ENCODE measurements at regions of chr1 and their contacts with region 1.

Region 1: GRCh38 chr1:109041621-109042468 is at the start of gene WDR47:
- DNase-seq: peak; percentile 94 to 95 (median 95)
- H3K4me3 ChIP-seq: peak within 1 kb of the TSS; percentile 74 to 97 (median 88)
- H3K4me3 Mint-ChIP-seq: peak within 1 kb of the TSS; percentile 86 to 93
- H3K27ac ChIP-seq: peak within 1 kb of the TSS; percentile 60 to 88
- H3K27ac Mint-ChIP-seq: peak within 1 kb of the TSS; percentile 77 to 92 (median 85)
- H3K4me1 ChIP-seq: peaks cover 13 to 17% of the 10 kb centered on the region in 2 donors
- H3K4me1 Mint-ChIP-seq: peaks cover 14% of the 10 kb centered on the region
- H3K27me3 ChIP-seq: no peaks in the 10 kb centered on the region
- H3K27me3 Mint-ChIP-seq: peaks cover 7 to 12% (median 9%) of the 10 kb centered on the region in 3 donors
- CTCF ChIP-seq: no peak
- polyA plus RNA-seq, gene WDR47: 5.2 to 7.6 (median 6.0) TPM

Region 2: DNA sequence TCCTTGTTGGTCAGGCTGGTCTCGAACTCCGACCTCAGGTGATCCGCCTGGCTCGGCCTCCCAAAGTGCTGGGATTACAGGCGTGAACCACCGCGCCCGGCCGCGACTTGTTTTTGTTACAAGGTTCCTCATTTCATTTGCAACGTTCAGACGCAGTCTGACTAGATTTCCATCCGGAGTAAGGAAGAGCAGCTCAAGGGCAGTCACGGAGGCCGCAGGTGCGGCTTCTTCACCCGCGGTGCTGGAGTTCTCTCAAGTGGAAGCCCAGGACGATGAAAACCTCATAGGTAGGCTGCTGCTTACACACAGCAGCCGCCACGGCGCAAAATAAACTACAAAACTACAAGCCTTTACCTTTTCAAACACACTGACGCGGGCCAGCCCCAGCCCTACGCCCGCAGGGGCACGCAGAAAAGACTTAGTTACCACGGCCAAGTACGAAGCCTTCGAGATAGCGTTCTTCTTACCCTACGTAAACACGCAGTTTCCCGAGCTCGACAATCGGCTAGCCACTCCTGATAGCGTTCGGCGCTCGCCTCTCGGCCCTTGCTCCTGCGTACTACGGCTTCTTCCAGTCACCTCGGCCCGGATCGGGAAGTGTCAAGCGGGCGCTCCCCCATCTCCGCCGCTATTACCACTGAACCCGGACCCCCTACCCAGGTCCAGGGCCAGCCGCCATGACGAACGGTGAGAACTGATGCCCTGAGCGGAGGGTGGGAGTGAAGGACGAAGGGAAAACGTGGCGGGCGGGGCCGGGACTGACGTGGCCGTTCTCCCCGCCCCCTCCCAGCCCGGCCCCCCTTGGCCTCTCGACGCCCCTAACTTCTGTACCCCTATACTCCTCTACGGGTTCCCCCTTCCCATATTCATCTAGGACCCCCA is 48.6 kb after region 1 on chr1 and contains the start of gene TMEM167B:
- intact Hi-C with region 1: loop called (anchors 5 kb)
- DNase-seq: peak; percentile 86 to 92 (median 92)
- H3K4me3 ChIP-seq: peak within 1 kb of the TSS; percentile 80 to 97 (median 81)
- H3K4me3 Mint-ChIP-seq: peak within 1 kb of the TSS; percentile 86 to 98
- H3K27ac ChIP-seq: peak within 1 kb of the TSS; percentile 96 to 98
- H3K27ac Mint-ChIP-seq: peak within 1 kb of the TSS; percentile 98 to 99 (median 99)
- H3K4me1 ChIP-seq: peaks cover 35 to 44% of the 10 kb centered on the region in 2 donors
- H3K4me1 Mint-ChIP-seq: peaks cover 41% of the 10 kb centered on the region
- H3K27me3 ChIP-seq: no peaks in the 10 kb centered on the region
- H3K27me3 Mint-ChIP-seq: peaks cover 0 to 2% (median 0%) of the 10 kb centered on the region in 3 donors
- CTCF ChIP-seq: no peak
- polyA plus RNA-seq, gene TMEM167B: 39.2 to 50.8 (median 43.3) TPM

Region 3: GRCh38 chr1:109099938-109100773 is 58.3 kb after region 1 on chr1:
- intact Hi-C with region 1: loop called in 1 of 2 experiments (anchors 5 kb)
- DNase-seq: peak; percentile 93 to 97 (median 95)
- H3K4me3 ChIP-seq: peak overlapping the region; percentile 64 to 88 (median 86)
- H3K4me3 Mint-ChIP-seq: peak overlapping the region; percentile 98 to 99
- H3K27ac ChIP-seq: peak overlapping the region; percentile 85 to 90
- H3K27ac Mint-ChIP-seq: peak overlapping the region; percentile 92 to 98 (median 96)
- H3K4me1 ChIP-seq: peaks cover 19 to 29% of the 10 kb centered on the region in 2 donors
- H3K4me1 Mint-ChIP-seq: peaks cover 21% of the 10 kb centered on the region
- H3K27me3 ChIP-seq: no peaks in the 10 kb centered on the region
- H3K27me3 Mint-ChIP-seq: peaks cover 0 to 3% (median 0%) of the 10 kb centered on the region in 3 donors
- CTCF ChIP-seq: peak; percentile 80

Measured in CD14-positive monocyte (primary cell).